ENCODE measurements at regions of chr15 and their contacts with region 1.

Region 1: DNA sequence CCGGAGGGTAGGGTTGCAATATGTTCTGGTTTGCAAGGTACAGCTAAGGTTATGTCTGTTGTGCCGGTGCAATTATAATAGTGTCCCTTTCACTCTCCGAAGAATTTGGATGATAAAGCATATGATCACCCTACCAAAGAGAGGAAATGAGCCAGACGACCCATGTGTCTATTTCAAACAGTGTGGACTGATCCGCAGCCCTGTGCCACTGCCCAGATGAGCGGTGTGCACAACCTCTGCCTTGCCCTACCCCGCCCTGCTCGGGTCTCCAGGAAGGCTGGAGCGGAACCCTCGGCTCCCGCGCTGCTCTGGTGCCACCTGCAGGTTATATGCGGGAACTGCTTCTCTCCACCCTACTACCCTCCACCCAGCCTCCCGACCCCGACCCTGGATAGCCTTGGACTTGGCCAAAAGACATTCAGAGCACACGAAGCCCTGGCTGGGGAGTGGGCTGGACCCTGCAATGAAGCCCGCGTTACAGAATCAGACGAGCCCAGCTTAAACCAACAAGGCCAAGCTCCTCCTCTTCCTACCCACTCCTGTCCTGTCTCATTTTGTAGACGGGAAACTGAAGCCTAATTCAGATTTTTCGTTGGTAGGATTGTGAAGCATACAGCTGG is 68.4 kb upstream of the CHRNB4 start:
- DNase-seq: peak; percentile 62
- ATAC-seq: peak; percentile 99
- H3K4me3 Mint-ChIP-seq: no peak overlapping the region
- H3K27ac Mint-ChIP-seq: no peak overlapping the region
- H3K4me1 Mint-ChIP-seq: peaks cover 6% of the 10 kb centered on the region
- H3K27me3 Mint-ChIP-seq: peaks cover 31% of the 10 kb centered on the region
- CTCF ChIP-seq: no peak

Region 2: DNA sequence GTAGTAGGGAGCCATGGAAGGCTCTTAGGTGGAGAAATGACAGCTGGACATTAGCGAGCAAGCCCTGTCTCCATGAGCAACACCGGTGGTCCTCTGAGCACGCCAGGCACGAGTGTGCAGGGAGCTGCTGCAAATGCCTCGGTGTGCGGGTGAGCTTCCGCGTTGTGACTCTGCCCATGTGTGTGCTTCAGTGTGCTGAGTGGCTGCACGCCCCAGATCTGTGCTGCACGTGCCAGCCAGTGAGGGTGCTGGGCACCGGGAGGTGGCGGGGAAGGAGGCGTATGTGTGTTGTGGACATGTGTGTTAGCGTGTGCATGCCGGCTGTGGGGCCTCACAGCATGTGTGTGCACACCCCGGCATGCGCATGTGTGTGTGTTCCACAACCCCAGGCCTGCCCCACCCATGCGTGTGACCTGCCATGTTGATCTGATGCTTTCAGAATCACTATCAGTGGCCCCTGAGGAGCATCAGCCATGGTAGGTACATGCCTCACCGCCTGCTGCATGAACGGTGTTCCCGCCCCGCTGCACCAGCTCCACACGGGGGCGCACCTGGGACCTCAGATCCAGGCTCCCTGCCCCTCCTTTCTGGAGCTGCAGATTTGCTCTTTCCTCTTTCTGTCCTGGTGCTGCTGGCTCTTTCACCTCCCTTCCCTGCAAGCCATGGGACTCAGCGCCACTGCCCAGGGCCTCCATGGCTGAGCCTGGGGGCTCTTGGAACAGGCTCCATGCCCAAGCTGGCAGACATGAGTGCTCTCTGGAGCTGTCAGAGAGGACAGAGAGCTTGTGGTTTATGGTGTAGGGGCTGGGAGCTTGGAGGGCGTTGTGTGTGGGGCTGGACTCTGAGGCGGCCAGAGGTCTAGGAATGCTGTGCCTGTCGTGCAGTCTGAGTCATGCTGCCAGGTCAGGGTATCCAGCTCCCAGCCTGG is 801.3 kb before region 1 on chr15:
- CTCF ChIA-PET with region 1: no interaction called
- POLR2A ChIA-PET with region 1: no interaction called
- intact Hi-C with region 1: loop called (anchors 1 kb)
- DNase-seq: no peak
- ATAC-seq: no peak
- H3K4me3 Mint-ChIP-seq: no peak overlapping the region
- H3K27ac Mint-ChIP-seq: no peak overlapping the region
- H3K4me1 Mint-ChIP-seq: no peaks in the 10 kb centered on the region
- H3K27me3 Mint-ChIP-seq: peaks cover 4% of the 10 kb centered on the region
- CTCF ChIP-seq: no peak

Region 3: GRCh38 chr15:78249131-78249530 is 460.2 kb before region 1 on chr15:
- CTCF ChIA-PET with region 1: no interaction called
- POLR2A ChIA-PET with region 1: no interaction called
- intact Hi-C with region 1: no loop called
- DNase-seq: no peak
- ATAC-seq: no peak
- H3K4me3 Mint-ChIP-seq: no peak overlapping the region
- H3K27ac Mint-ChIP-seq: no peak overlapping the region
- H3K4me1 Mint-ChIP-seq: no peaks in the 10 kb centered on the region
- H3K27me3 Mint-ChIP-seq: no peaks in the 10 kb centered on the region
- CTCF ChIP-seq: no peak

Region 4: GRCh38 chr15:78506971-78507830 is 202.2 kb before region 1 on chr15 and contains the start of gene HYKK:
- CTCF ChIA-PET with region 1: no interaction called
- POLR2A ChIA-PET with region 1: no interaction called
- intact Hi-C with region 1: loop called (anchors 10 kb)
- DNase-seq: peak; percentile 53
- ATAC-seq: peak; percentile 87
- H3K4me3 Mint-ChIP-seq: peak within 1 kb of the TSS; percentile 91
- H3K27ac Mint-ChIP-seq: no peak within 1 kb of the TSS
- H3K4me1 Mint-ChIP-seq: peaks cover 11% of the 10 kb centered on the region
- H3K27me3 Mint-ChIP-seq: peaks cover 13% of the 10 kb centered on the region
- CTCF ChIP-seq: no peak
- total RNA-seq, gene HYKK: 0.10 and 0.53 TPM in 2 replicates

Region 5: GRCh38 chr15:78618490-78618934 is 90.9 kb before region 1 on chr15:
- CTCF ChIA-PET with region 1: interaction called, 11 read pairs
- POLR2A ChIA-PET with region 1: no interaction called
- intact Hi-C with region 1: loop called (anchors 1 kb)
- DNase-seq: peak; percentile 59
- ATAC-seq: peak; percentile 67
- H3K4me3 Mint-ChIP-seq: no peak overlapping the region
- H3K27ac Mint-ChIP-seq: no peak overlapping the region
- H3K4me1 Mint-ChIP-seq: peaks cover 5% of the 10 kb centered on the region
- H3K27me3 Mint-ChIP-seq: peaks cover 34% of the 10 kb centered on the region
- CTCF ChIP-seq: peak; percentile 45

Region 6: GRCh38 chr15:78638658-78639314 is 70.6 kb before region 1 on chr15:
- CTCF ChIA-PET with region 1: interaction called, 5 read pairs
- POLR2A ChIA-PET with region 1: no interaction called
- intact Hi-C with region 1: loop called (anchors 1 kb)
- DNase-seq: no peak
- ATAC-seq: peak; percentile 69
- H3K4me3 Mint-ChIP-seq: no peak overlapping the region
- H3K27ac Mint-ChIP-seq: no peak overlapping the region
- H3K4me1 Mint-ChIP-seq: peaks cover 11% of the 10 kb centered on the region
- H3K27me3 Mint-ChIP-seq: peaks cover 9% of the 10 kb centered on the region
- CTCF ChIP-seq: no peak

Region 7: DNA sequence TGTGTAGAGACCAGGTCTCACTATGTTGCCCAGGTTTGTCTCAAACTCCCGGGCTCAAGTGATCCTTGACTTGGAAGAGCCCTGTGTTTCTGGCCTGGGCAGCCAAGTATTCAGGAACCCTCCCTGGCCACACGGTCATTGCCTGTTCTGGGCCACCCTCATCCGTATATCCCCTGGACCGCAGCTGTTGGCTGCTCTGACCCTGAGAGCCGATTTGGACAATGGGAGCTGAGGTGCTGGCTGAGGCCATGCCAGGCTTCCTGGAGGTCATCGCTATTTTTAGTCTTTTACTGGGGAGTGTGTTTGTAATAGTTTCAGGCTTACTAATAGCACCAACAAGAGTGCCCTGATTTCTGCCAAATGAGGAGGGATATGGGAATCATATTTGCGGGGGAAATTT is 41.2 kb after region 1 on chr15:
- CTCF ChIA-PET with region 1: no interaction called
- POLR2A ChIA-PET with region 1: no interaction called
- intact Hi-C with region 1: loop called (anchors 1 kb)
- DNase-seq: no peak
- ATAC-seq: no peak
- H3K4me3 Mint-ChIP-seq: peak overlapping the region; percentile 44
- H3K27ac Mint-ChIP-seq: peak overlapping the region; percentile 18
- H3K4me1 Mint-ChIP-seq: peaks cover 8% of the 10 kb centered on the region
- H3K27me3 Mint-ChIP-seq: no peaks in the 10 kb centered on the region
- CTCF ChIP-seq: no peak

Region 8: GRCh38 chr15:78790030-78790429 is 80.7 kb after region 1 on chr15:
- CTCF ChIA-PET with region 1: no interaction called
- POLR2A ChIA-PET with region 1: no interaction called
- intact Hi-C with region 1: no loop called
- DNase-seq: no peak
- ATAC-seq: no peak
- H3K4me3 Mint-ChIP-seq: no peak overlapping the region
- H3K27ac Mint-ChIP-seq: no peak overlapping the region
- H3K4me1 Mint-ChIP-seq: no peaks in the 10 kb centered on the region
- H3K27me3 Mint-ChIP-seq: no peaks in the 10 kb centered on the region
- CTCF ChIP-seq: no peak

Measured in activated B cell treated with CpG ODN at 0.5 μM for 24 hours (primary cell).